PC-3 (cell line): ENCODE measurements at regions of chrX and their contacts with region 1.

Region 1: GRCh38 chrX:120485638-120486520 is 16.8 kb upstream of the LAMP2 start:
- DNase-seq: peak; percentile 86
- ATAC-seq: peak; percentile 93
- H3K4me3 ChIP-seq: peak overlapping the region; percentile 64
- H3K27ac ChIP-seq: peak overlapping the region; percentile 76
- H3K4me1 ChIP-seq: peaks cover 9% of the 10 kb centered on the region; the same call in 1 of the 2 replicates
- H3K27me3 ChIP-seq: no peaks in the 10 kb centered on the region
- CTCF ChIP-seq: peak; percentile 68

Region 2: DNA sequence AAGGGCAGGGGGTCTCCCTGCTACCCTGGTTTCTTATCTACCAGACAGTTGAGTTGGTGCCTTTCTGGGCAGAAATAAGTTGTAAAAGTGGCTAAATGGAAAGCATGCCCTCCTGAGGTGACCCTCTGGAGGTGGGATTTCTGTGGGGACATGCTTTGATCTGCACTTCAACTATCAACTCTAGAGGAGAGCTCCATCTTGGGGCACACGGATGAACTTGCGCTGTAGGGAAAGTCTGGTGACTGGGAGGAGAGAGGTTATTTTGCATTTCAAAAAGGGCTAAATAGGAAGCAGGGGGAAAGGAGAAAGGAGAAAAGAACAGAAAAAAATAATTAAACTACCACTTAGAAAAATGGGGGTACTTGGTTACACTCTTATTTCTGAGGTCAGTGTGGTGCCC is 395.7 kb before region 1 on chrX:
- CTCF ChIA-PET with region 1: no interaction called
- POLR2A ChIA-PET with region 1: no interaction called
- intact Hi-C with region 1: no loop called
- DNase-seq: no peak
- ATAC-seq: no peak
- H3K4me3 ChIP-seq: no peak overlapping the region
- H3K27ac ChIP-seq: no peak overlapping the region
- H3K4me1 ChIP-seq: no peaks in the 10 kb centered on the region
- H3K27me3 ChIP-seq: no peaks in the 10 kb centered on the region
- CTCF ChIP-seq: peak; percentile 24; the same call in 1 of the 2 replicates

Region 3: GRCh38 chrX:120380699-120381098 is 105.2 kb before region 1 on chrX:
- CTCF ChIA-PET with region 1: interaction called, 12 read pairs
- POLR2A ChIA-PET with region 1: no interaction called
- intact Hi-C with region 1: no loop called
- DNase-seq: peak; percentile 41
- ATAC-seq: peak; percentile 50
- H3K4me3 ChIP-seq: no peak overlapping the region
- H3K27ac ChIP-seq: no peak overlapping the region
- H3K4me1 ChIP-seq: no peaks in the 10 kb centered on the region
- H3K27me3 ChIP-seq: no peaks in the 10 kb centered on the region
- CTCF ChIP-seq: peak; percentile 62

Region 4: GRCh38 chrX:120457766-120458180 is 28.1 kb before region 1 on chrX:
- CTCF ChIA-PET with region 1: interaction called, 15 read pairs
- POLR2A ChIA-PET with region 1: no interaction called
- intact Hi-C with region 1: no loop called
- DNase-seq: peak; percentile 90
- ATAC-seq: peak; percentile 88
- H3K4me3 ChIP-seq: peak overlapping the region; percentile 42; the same call in 1 of the 2 replicates
- H3K27ac ChIP-seq: peak overlapping the region; percentile 69
- H3K4me1 ChIP-seq: peaks cover 43% of the 10 kb centered on the region
- H3K27me3 ChIP-seq: no peaks in the 10 kb centered on the region
- CTCF ChIP-seq: no peak

Region 5: DNA sequence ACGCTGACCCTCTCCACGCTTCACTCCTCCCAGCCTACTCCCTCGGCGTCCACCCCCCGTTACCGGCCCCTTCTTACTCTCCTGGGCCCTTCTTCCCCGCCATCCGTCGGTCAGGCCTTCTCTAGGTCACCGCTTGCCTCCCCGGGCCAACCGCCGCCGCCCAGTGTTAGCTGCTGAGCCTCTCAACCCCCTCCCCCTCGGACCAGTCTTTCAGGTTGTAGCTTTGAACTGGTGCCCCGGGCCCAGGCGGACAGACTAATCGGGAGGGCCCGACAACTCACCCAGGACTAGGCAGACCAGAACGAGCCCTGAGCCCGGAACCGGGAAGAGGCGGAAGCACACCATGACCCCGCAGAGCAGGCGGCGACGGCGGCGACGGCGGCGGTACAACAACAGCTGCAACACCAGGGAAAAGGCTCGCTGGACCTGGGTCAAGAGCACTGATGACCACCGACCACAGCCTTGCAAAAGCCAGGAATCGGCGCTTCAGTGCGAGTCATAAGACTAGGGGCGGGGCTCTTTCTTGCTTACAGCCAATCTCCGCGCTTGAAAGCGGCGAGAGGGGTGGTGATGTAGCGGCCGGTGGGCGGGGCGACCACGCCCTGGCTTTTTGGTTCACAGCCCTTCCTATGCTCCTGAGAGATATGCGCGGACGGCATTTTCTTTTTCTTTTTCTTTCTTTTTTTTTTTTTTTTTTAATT is 16.9 kb before region 1 on chrX and contains the start of gene LAMP2:
- CTCF ChIA-PET with region 1: no interaction called
- POLR2A ChIA-PET with region 1: no interaction called
- intact Hi-C with region 1: loop called (anchors 1 kb)
- DNase-seq: peak; percentile 89
- ATAC-seq: peak; percentile 90
- H3K4me3 ChIP-seq: peak within 1 kb of the TSS; percentile 87
- H3K27ac ChIP-seq: peak within 1 kb of the TSS; percentile 70
- H3K4me1 ChIP-seq: peaks cover 12% of the 10 kb centered on the region; the same call in 1 of the 2 replicates
- H3K27me3 ChIP-seq: no peaks in the 10 kb centered on the region
- CTCF ChIP-seq: no peak
- total RNA-seq, gene LAMP2: 51.5 and 53.8 TPM in 2 replicates

Region 6: GRCh38 chrX:120499301-120500072 is 13.6 kb after region 1 on chrX:
- CTCF ChIA-PET with region 1: interaction called, 12 read pairs
- POLR2A ChIA-PET with region 1: no interaction called
- intact Hi-C with region 1: no loop called
- DNase-seq: no peak
- ATAC-seq: no peak
- H3K4me3 ChIP-seq: no peak overlapping the region
- H3K27ac ChIP-seq: no peak overlapping the region
- H3K4me1 ChIP-seq: peaks cover 13% of the 10 kb centered on the region
- H3K27me3 ChIP-seq: no peaks in the 10 kb centered on the region
- CTCF ChIP-seq: no peak

Region 7: DNA sequence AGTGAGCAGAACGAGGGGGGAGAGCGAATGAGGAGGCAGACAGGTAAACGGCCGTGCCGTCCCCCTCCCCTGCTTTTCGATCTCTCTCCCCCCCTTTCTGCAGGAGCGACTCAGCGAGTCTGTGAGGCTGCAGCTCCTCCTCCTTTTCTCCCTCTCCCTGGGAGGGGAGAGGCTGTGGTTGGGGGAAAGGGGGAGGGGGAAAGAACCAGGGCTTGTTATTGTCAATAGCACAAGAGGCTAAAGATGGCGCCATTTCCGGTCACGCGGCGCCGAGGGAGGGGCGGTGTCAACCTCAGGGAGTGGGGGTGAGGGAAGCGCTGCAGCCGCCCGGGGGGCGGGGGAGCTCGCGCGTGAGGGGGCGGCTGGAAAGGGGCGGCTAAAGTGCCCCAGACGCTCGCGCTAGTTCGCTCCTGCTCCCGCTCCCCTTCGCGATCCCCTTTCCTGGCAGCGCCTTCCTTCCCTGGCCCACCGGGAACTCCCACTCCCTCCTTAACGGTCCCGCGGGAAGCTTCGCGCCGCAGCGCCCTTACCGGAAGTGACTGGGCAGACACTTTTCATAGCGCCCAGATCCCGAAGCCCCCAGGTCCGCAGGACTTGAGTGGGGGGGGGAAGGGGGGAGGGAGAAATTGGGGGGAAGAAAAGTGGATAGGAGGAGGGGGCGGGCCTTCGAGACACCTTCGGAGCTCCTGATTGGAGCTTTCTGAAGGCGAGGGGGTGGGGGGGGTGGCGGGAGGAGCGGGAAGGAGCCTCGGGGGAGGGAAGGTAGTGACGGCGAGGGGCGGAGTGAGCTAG is 75.2 kb after region 1 on chrX and contains the start of gene CUL4B:
- CTCF ChIA-PET with region 1: no interaction called
- POLR2A ChIA-PET with region 1: no interaction called
- intact Hi-C with region 1: no loop called
- DNase-seq: peak; percentile 93
- ATAC-seq: peak; percentile 71
- H3K4me3 ChIP-seq: peak within 1 kb of the TSS; percentile 92
- H3K27ac ChIP-seq: peak within 1 kb of the TSS; percentile 97
- H3K4me1 ChIP-seq: peaks cover 27% of the 10 kb centered on the region
- H3K27me3 ChIP-seq: no peaks in the 10 kb centered on the region
- CTCF ChIP-seq: no peak
- total RNA-seq, gene CUL4B: 38.1 and 47.6 TPM in 2 replicates